MCF 10A (cell line): ENCODE measurements at regions of chr16 and their contacts with region 1.

Region 1: DNA sequence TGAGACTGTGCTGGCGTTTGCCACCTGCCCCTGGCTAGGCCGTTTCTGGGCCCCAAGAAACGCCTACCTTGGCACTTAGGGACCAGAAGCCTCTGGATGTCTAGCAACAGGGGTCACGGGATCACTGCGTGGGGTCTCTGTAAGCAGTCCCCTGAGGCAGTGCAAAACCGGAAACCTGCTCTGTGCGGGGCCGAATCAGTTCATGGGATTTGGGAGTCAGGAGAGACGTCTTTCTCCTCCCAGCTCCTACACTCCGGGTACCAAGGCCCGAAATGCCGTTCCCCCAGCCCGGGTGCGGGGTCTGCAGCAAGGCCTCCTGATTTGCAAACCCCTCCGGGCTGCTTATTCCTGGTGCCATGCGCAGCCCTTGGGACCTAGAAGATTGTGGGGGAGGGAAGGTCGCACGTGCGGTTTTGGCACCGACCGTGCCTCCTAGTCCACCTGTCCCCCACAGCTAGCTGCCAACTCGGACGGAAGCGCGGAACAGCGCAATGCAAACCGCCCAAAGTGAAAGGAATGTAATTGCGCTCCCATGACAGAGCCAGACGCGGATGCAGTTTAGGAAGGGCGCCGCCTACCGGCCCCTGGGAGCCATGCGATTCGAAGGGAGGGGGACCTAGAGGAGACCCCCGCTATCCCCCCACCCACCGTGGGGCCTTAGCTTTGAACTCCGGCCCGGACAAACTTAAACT is 6.5 kb downstream of the IRX5 start:
- DNase-seq: peak; percentile 77
- H3K4me3 Mint-ChIP-seq: peak overlapping the region; percentile 88
- H3K27ac Mint-ChIP-seq: peak overlapping the region; percentile 97
- H3K4me1 Mint-ChIP-seq: peaks cover 10% of the 10 kb centered on the region
- H3K27me3 Mint-ChIP-seq: no peaks in the 10 kb centered on the region
- CTCF ChIP-seq: peak; percentile 80

Region 2: GRCh38 chr16:53549970-53550690 is 1387.0 kb before region 1 on chr16:
- CTCF ChIA-PET with region 1: no interaction called
- POLR2A ChIA-PET with region 1: no interaction called
- intact Hi-C with region 1: loop called (anchors 5 kb)
- DNase-seq: peak; percentile 81
- H3K4me3 Mint-ChIP-seq: no peak overlapping the region
- H3K27ac Mint-ChIP-seq: no peak overlapping the region
- H3K4me1 Mint-ChIP-seq: peaks cover 6% of the 10 kb centered on the region
- H3K27me3 Mint-ChIP-seq: no peaks in the 10 kb centered on the region
- CTCF ChIP-seq: peak; percentile 69

Region 3: GRCh38 chr16:54657058-54657708 is 279.9 kb before region 1 on chr16:
- CTCF ChIA-PET with region 1: interaction called, 3 read pairs
- POLR2A ChIA-PET with region 1: interaction called, 190 read pairs
- intact Hi-C with region 1: no loop called
- DNase-seq: peak; percentile 98
- H3K4me3 Mint-ChIP-seq: peak overlapping the region; percentile 63
- H3K27ac Mint-ChIP-seq: peak overlapping the region; percentile 73
- H3K4me1 Mint-ChIP-seq: peaks cover 38% of the 10 kb centered on the region
- H3K27me3 Mint-ChIP-seq: no peaks in the 10 kb centered on the region
- CTCF ChIP-seq: no peak

Region 4: GRCh38 chr16:54846766-54847165 is 90.4 kb before region 1 on chr16:
- CTCF ChIA-PET with region 1: no interaction called
- POLR2A ChIA-PET with region 1: interaction called, 15 read pairs
- intact Hi-C with region 1: no loop called
- DNase-seq: peak; percentile 81
- H3K4me3 Mint-ChIP-seq: peak overlapping the region; percentile 51
- H3K27ac Mint-ChIP-seq: peak overlapping the region; percentile 94
- H3K4me1 Mint-ChIP-seq: peaks cover 22% of the 10 kb centered on the region
- H3K27me3 Mint-ChIP-seq: no peaks in the 10 kb centered on the region
- CTCF ChIP-seq: no peak

Region 5: DNA sequence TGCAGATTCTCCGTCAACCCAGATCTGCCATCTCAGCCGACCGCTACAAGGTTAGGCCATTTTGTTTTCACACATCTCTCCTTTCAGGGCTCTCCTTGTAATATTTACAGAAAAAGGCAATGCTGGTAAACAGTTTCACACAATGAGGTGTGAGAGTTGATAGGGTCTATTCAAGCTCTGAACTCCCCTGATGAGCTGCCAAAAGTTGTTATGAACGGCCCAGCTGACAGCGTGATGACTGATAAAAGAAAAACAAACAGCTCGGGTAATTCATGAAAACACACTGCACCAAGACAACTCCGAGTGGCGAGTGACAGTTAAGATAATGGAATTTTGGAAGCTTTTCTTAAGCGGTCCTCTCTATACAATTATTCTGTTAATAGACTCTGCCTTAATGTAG is 74.6 kb before region 1 on chr16:
- CTCF ChIA-PET with region 1: no interaction called
- POLR2A ChIA-PET with region 1: no interaction called
- intact Hi-C with region 1: no loop called
- DNase-seq: no peak
- H3K4me3 Mint-ChIP-seq: no peak overlapping the region
- H3K27ac Mint-ChIP-seq: no peak overlapping the region
- H3K4me1 Mint-ChIP-seq: no peaks in the 10 kb centered on the region
- H3K27me3 Mint-ChIP-seq: no peaks in the 10 kb centered on the region
- CTCF ChIP-seq: no peak

Region 6: DNA sequence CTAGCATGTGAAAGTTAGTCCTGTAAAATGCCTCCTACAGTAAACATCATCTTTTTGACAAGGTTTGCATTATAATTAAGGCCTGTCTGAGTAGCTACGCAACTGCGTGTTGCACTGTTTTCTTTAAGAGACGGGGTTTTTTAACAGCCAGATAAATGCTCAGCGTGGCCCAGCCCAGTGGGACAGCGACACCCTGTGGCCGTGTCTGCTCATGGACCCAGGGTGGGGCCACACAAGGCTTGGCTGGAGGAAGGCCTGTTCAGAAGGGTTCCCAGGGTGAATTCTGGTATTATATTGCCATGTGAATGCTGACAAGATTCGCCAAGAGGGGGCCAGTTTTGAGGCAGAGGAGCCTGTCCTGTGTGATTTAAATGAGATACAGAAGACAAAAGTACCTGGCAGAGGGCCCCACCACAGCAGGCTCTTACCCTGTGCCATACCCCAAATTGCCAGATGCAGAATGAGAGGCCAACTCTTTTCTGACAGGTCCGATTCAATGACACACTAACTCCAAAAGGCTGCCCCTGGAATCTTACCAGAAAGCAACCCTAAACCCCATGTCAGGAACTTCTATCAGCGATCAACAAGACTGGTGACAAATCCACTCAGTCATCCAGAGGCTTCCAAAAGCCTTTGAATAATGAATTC is 321.0 kb after region 1 on chr16:
- CTCF ChIA-PET with region 1: interaction called, 6 read pairs
- POLR2A ChIA-PET with region 1: no interaction called
- intact Hi-C with region 1: loop called (anchors 1 kb)
- DNase-seq: peak; percentile 62
- H3K4me3 Mint-ChIP-seq: no peak overlapping the region
- H3K27ac Mint-ChIP-seq: no peak overlapping the region
- H3K4me1 Mint-ChIP-seq: no peaks in the 10 kb centered on the region
- H3K27me3 Mint-ChIP-seq: no peaks in the 10 kb centered on the region
- CTCF ChIP-seq: peak; percentile 79

Region 7: DNA sequence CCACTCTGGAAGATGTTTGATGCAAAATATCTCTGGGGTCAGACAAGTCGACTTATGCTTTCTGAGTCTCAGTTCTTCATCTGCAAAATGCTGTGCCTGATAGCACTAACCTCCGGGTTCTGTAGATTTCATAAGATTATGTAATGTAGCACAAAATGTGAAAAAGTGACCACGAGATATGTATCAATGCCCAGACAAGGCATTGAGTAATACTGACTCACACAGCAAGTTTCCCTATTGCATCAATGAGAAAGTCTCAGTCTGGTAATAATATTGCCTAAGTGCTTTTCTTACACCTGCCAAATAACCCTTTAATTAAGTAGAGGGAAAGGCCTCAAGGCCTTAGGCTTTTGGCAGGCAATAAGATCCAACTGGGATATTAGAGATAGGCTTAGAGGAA is 500.5 kb after region 1 on chr16:
- CTCF ChIA-PET with region 1: interaction called, 4 read pairs
- POLR2A ChIA-PET with region 1: interaction called, 10 read pairs
- intact Hi-C with region 1: no loop called
- DNase-seq: peak; percentile 95
- H3K4me3 Mint-ChIP-seq: no peak overlapping the region
- H3K27ac Mint-ChIP-seq: no peak overlapping the region
- H3K4me1 Mint-ChIP-seq: peaks cover 29% of the 10 kb centered on the region
- H3K27me3 Mint-ChIP-seq: peaks cover 30% of the 10 kb centered on the region
- CTCF ChIP-seq: no peak